Activated CD4-positive, alpha-beta T cell treated with anti-CD3 and anti-CD28 coated beads, Interleukin-2, amount 10 ng/mL, durations not matched to agents 7 days and 5 days (primary cell): ENCODE measurements at regions of chr6 and their contacts with region 1.

Region 1: DNA sequence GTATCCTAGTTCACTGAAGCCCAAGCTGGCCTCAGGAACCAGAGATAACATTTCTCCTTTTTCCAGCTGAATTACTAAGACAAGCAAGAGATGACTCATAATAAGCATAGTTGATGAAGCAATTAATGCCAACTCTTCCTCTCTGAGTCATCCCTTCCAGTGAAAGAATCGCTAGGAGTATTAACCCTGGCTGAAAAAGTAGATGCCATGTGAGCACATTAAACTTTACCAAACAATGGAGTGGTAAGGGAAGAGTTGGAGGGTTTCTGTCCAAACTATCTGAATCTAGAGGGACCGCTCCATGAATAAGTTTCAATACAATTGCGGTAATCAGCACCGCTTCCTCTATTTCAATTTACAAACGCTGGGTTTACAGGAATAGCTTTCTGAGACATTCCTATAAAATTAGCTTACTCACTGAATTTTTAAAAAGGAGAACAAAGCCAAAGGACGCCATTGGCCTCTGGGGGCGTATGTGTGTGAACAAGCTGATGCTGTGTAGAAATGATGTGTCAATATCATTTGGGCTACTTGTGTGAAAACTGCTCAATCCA is 48.3 kb downstream of the ATXN1 start:
- DNase-seq: no peak
- H3K4me3 Mint-ChIP-seq: peak overlapping the region; percentile 48
- H3K27ac Mint-ChIP-seq: peak overlapping the region; percentile 82
- H3K4me1 Mint-ChIP-seq: peaks cover 33% of the 10 kb centered on the region
- H3K27me3 Mint-ChIP-seq: no peaks in the 10 kb centered on the region

Region 2: DNA sequence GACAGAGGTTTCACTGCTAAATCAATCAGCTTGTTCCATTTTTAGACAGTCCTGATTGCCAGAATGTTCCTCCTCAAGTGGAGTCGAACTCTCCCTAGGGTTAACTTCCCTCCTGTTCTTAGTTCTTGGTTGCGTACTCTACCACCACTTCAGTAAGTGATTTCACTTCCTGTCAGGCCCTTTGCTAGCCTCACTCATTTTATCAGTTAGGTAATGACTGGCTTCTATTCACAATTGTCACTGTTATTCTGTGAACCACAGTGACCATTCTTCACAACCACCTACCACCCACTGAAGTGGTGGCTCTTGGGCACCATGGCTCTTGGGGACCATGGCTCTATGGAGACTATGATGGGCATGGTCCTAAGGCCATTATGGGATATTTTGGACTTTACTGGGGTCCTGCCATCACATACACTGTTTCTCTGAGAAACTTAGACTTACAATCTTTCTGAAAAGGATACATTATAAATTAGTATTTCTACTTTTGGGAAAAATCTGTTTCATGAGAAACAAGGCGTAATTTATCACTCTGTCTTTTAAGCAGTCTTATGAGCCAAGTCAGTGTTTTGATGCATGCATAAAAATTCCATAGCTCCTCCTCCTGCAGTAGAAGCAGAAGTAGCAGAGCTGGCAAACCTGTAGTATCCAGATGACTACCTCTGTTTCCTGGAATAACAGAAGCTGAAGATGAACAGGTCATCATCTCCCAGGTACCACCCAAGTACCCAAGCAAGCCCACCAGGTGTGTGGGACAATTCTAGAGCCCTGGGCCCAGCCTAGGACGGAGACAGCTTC is 18.0 kb before region 1 on chr6:
- CTCF ChIA-PET with region 1: interaction called, 18 read pairs
- POLR2A ChIA-PET with region 1: no interaction called
- DNase-seq: no peak
- H3K4me3 Mint-ChIP-seq: no peak overlapping the region
- H3K27ac Mint-ChIP-seq: peak overlapping the region; percentile 41
- H3K4me1 Mint-ChIP-seq: peaks cover 67% of the 10 kb centered on the region
- H3K27me3 Mint-ChIP-seq: no peaks in the 10 kb centered on the region